ENCODE measurements at regions of chr10 and their contacts with region 1.

Region 1: DNA sequence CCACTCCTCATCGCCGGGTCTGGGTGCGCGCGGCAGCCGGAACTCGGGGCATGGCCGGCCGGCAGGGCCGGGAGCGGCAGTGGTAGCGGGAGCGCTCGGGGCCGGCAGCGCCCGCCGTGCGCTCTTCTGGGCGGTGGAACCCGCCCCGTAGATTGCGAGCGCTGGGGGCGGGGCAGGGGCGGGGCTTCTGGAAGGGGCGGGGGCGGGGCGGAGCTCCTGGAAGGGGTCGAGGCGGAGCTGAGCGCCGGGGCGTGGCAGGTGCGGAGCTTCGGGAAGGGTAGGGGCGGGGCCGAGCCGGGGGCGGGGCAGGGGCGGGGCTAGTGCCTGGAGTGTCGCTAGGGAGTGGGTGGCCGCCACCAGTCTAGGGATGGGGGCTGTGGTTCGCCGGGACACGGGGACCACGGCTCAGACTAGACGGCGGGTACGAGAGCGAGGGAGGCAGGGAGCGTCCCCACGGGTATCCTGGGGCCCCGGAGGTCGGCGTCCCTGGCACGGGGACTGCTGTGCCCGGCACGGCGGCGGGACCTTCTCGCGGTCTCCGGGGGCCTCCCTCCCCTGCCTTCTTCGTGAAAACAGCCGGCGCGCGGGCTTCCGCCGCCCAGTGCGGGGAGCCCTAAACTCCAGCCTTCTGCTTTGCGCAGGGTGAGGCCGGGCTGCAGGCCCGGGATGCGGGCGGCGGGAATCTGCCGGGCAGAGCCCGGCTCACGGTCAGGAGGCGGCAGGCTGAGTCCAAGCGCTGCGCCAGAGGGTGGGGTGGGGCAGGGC is at the start of gene STK32C:
- DNase-seq: peak; percentile 82 to 94 (median 90)
- ATAC-seq: peak; percentile 90
- H3K4me3 ChIP-seq: peak within 1 kb of the TSS; percentile 65 to 74
- H3K4me3 Mint-ChIP-seq: peak within 1 kb of the TSS; percentile 87
- H3K27ac ChIP-seq: peak within 1 kb of the TSS; percentile 43 to 50
- H3K27ac Mint-ChIP-seq: peak within 1 kb of the TSS; percentile 60
- H3K4me1 ChIP-seq: peaks cover 13% of the 10 kb centered on the region
- H3K4me1 Mint-ChIP-seq: peaks cover 17% of the 10 kb centered on the region
- H3K27me3 ChIP-seq: peaks cover 0 to 2% of the 10 kb centered on the region in 2 experiments
- H3K27me3 Mint-ChIP-seq: no peaks in the 10 kb centered on the region
- CTCF ChIP-seq: no peak
- total RNA-seq, gene STK32C: 5.0 to 5.4 TPM

Region 2: DNA sequence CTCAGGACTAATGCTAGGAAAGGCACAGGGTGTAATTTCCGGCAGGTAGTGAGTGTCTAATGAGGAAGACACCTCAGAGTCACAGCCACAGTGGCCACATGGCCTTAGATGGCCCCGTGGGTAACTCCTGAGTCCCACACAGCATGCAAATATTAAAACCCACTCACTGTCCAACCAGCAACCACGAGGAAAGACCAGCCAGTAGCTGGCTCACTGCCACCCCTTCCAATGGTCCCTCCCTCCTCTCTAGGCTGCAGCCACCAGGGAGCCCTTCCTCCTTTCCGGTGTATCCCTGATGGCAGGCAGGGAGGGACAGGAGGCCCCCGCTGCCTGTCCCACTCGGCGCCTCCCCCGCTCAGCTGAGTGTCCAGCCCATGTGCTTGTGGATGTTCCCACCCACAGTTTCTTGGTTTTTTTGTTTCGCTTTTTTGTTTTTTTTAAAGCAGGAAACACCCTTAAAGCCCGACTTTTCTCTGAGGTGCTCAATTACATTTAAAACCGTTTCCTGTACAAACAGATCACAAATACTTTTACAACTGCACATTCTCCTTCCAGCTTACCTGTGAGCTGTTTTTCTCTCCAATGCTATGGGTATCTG is 335.4 kb before region 1 on chr10:
- CTCF ChIA-PET with region 1: no interaction called
- POLR2A ChIA-PET with region 1: no interaction called
- intact Hi-C with region 1: no loop called
- DNase-seq: peak in 6 of 9 experiments; percentile 15 to 72 (median 50)
- ATAC-seq: peak; percentile 62
- H3K4me3 ChIP-seq: peak overlapping the region; percentile 38 to 52
- H3K4me3 Mint-ChIP-seq: peak overlapping the region; percentile 79
- H3K27ac ChIP-seq: peak overlapping the region; percentile 34 to 68
- H3K27ac Mint-ChIP-seq: peak overlapping the region; percentile 94
- H3K4me1 ChIP-seq: peaks cover 67% of the 10 kb centered on the region
- H3K4me1 Mint-ChIP-seq: peaks cover 69% of the 10 kb centered on the region
- H3K27me3 ChIP-seq: no peaks in the 10 kb centered on the region
- H3K27me3 Mint-ChIP-seq: no peaks in the 10 kb centered on the region
- CTCF ChIP-seq: no peak

Region 3: DNA sequence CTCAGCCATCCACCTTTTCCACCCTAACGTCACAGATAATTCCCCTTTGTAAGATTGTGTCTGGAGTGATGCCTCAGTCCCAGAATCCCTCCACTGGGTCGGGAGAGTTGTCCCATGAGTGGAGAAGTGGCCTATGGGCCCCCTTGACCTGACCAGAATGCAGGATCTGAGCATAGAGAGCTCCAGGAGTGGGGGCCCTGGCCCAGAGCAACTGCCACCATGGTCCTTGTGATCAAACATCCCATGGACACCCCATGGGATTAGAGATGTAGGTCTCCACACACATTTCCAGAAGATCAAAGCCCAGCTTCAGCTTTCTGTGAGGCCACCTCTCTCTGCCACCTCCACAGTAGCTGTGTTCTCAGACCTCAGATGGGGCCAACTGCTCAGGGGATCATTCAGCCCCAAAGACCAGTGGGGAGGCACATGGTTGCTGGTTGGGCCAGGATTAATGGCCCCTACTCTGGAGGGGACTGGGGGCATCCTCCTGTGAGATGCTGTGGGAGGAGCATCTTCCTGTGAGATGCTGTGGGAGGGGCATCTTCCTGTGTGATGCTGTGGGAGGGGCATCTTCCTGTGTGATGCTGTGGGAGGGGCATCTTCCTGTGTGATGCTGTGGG is 149.8 kb before region 1 on chr10:
- CTCF ChIA-PET with region 1: no interaction called
- POLR2A ChIA-PET with region 1: no interaction called
- intact Hi-C with region 1: loop called in 1 of 2 experiments (anchors 2 kb)
- DNase-seq: peak in 5 of 9 experiments; percentile 21 to 74 (median 46)
- ATAC-seq: peak; percentile 20
- H3K4me3 ChIP-seq: no peak overlapping the region
- H3K4me3 Mint-ChIP-seq: no peak overlapping the region
- H3K27ac ChIP-seq: peak overlapping the region; percentile 98 to 99
- H3K27ac Mint-ChIP-seq: peak overlapping the region; percentile 87
- H3K4me1 ChIP-seq: peaks cover 30% of the 10 kb centered on the region
- H3K4me1 Mint-ChIP-seq: peaks cover 19% of the 10 kb centered on the region
- H3K27me3 ChIP-seq: no peaks in the 10 kb centered on the region
- H3K27me3 Mint-ChIP-seq: no peaks in the 10 kb centered on the region
- CTCF ChIP-seq: no peak

Region 4: DNA sequence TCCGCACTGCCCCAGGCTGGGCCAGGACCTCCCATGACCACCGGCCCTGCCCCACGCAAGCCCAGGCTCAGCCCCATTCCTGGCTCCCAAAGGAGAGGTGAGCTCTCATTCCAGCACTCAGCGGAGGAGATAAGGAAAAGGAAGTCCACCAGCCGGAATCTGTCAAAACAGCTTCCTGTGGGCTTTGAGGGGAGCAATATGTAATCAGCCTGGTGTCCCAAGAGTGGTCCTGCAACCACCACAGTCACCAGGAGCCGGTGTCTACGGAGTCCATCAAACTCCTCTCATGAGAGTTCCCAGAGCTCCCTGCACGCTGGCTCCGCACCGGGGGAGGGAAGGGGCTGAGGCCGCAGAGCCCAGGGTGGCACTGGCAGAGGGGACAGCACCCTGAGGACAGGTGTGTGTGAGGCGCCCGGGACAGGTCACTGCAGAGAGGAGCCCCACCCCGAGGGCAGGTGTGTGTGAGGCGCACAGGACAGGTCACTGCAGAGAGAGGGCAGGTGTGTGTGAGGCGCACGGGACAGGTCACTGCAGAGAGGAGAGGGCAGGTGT is 58.1 kb before region 1 on chr10:
- CTCF ChIA-PET with region 1: no interaction called
- POLR2A ChIA-PET with region 1: no interaction called
- intact Hi-C with region 1: loop called in 1 of 2 experiments (anchors 2 kb)
- DNase-seq: no peak
- ATAC-seq: no peak
- H3K4me3 ChIP-seq: no peak overlapping the region
- H3K4me3 Mint-ChIP-seq: no peak overlapping the region
- H3K27ac ChIP-seq: no peak overlapping the region
- H3K27ac Mint-ChIP-seq: no peak overlapping the region
- H3K4me1 ChIP-seq: peaks cover 1% of the 10 kb centered on the region
- H3K4me1 Mint-ChIP-seq: peaks cover 2% of the 10 kb centered on the region
- H3K27me3 ChIP-seq: no peaks in the 10 kb centered on the region
- H3K27me3 Mint-ChIP-seq: no peaks in the 10 kb centered on the region
- CTCF ChIP-seq: no peak

Region 5: DNA sequence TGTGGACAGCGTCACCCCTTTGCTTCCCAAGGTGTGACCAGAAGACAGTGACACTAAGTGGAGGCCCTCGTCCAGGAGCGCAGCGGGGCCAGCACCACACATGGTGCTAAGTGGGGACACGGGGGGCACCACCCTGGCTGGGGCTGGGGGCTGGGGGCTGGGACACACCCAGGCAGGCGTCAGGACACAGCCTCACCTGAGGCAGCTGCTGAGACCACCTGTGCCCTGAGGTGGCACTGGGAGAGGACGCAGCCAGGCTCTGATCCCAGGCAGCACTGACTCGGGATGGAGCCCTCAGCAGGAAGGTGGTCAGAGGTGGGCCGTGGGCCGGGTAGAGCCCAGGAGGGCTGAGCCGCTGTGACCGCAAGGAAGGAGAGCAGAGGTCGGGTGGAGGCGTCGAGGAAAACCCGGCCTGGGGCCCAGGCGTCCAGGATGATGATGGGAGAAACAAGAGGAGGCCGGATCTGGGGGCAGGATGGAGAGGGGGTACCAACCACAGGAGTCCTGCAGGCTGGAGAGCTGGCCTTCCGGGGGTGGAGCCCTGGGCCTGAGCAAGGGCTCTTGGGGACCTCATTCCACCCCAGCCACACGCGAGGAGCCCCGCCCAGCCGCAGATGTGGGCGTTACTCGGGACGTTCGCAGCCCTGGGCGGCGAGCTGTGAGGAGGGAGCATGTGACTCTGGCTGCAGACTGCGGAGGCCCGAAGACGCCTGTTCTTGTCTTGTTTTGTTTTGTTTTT is 46.5 kb after region 1 on chr10:
- CTCF ChIA-PET with region 1: no interaction called
- POLR2A ChIA-PET with region 1: no interaction called
- intact Hi-C with region 1: loop called (anchors 1 to 5 kb)
- DNase-seq: no peak
- ATAC-seq: no peak
- H3K4me3 ChIP-seq: no peak overlapping the region
- H3K4me3 Mint-ChIP-seq: no peak overlapping the region
- H3K27ac ChIP-seq: no peak overlapping the region
- H3K27ac Mint-ChIP-seq: no peak overlapping the region
- H3K4me1 ChIP-seq: peaks cover 3% of the 10 kb centered on the region
- H3K4me1 Mint-ChIP-seq: peaks cover 5% of the 10 kb centered on the region
- H3K27me3 ChIP-seq: no peaks in the 10 kb centered on the region
- H3K27me3 Mint-ChIP-seq: no peaks in the 10 kb centered on the region
- CTCF ChIP-seq: no peak

Region 6: DNA sequence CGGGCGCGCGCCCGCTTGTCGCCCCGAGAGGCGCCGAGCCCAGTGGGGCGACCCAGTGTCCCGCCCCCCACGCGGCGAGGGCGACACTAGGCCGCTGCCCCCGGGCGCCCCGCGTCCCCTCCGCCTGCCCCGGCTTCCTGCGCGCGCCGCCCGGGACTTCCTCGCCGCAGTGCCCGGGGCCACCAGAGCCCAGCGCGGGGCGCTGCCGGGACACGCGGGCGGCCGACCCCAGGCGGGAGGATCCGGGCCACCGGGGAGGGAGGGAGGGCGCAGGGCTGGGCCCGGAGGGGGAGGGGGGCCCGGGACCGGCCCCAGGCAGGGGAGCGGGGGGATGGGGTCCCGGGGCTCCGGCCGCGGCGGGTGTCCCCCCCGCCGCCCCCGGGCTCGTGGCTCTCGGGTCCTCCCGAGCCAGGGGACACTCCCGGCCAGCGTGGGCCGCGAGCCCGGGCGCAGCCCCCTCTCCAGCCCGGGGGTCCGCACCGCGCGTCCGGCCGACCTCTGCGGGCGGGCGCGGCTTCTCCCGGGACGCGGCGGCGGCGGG is 88.6 kb after region 1 on chr10:
- CTCF ChIA-PET with region 1: no interaction called
- POLR2A ChIA-PET with region 1: no interaction called
- intact Hi-C with region 1: loop called in 1 of 2 experiments (anchors 1 kb)
- DNase-seq: peak in 8 of 9 experiments; percentile 49 to 87 (median 66)
- ATAC-seq: peak; percentile 72
- H3K4me3 ChIP-seq: peak overlapping the region; percentile 30 to 34
- H3K4me3 Mint-ChIP-seq: no peak overlapping the region
- H3K27ac ChIP-seq: peak overlapping the region; percentile 37 to 57
- H3K27ac Mint-ChIP-seq: no peak overlapping the region
- H3K4me1 ChIP-seq: peaks cover 12% of the 10 kb centered on the region
- H3K4me1 Mint-ChIP-seq: peaks cover 22% of the 10 kb centered on the region
- H3K27me3 ChIP-seq: no peaks in the 10 kb centered on the region
- H3K27me3 Mint-ChIP-seq: no peaks in the 10 kb centered on the region
- CTCF ChIP-seq: peak; percentile 17

Region 7: GRCh38 chr10:132452631-132453469 is 144.8 kb after region 1 on chr10:
- CTCF ChIA-PET with region 1: no interaction called
- POLR2A ChIA-PET with region 1: no interaction called
- intact Hi-C with region 1: loop called (anchors 1 to 5 kb)
- DNase-seq: peak; percentile 86 to 96 (median 94)
- ATAC-seq: peak; percentile 92
- H3K4me3 ChIP-seq: peak overlapping the region in 1 of 2 experiments; percentile 20
- H3K4me3 Mint-ChIP-seq: peak overlapping the region; percentile 42
- H3K27ac ChIP-seq: peak overlapping the region; percentile 65 to 79
- H3K27ac Mint-ChIP-seq: peak overlapping the region; percentile 89
- H3K4me1 ChIP-seq: peaks cover 35% of the 10 kb centered on the region
- H3K4me1 Mint-ChIP-seq: peaks cover 29% of the 10 kb centered on the region
- H3K27me3 ChIP-seq: no peaks in the 10 kb centered on the region
- H3K27me3 Mint-ChIP-seq: no peaks in the 10 kb centered on the region
- CTCF ChIP-seq: peak; percentile 88

Measured in CD8-positive, alpha-beta T cell (primary cell).